HCT116 (cell line): ENCODE measurements at regions of chr12 and their contacts with region 1.

Region 1: DNA sequence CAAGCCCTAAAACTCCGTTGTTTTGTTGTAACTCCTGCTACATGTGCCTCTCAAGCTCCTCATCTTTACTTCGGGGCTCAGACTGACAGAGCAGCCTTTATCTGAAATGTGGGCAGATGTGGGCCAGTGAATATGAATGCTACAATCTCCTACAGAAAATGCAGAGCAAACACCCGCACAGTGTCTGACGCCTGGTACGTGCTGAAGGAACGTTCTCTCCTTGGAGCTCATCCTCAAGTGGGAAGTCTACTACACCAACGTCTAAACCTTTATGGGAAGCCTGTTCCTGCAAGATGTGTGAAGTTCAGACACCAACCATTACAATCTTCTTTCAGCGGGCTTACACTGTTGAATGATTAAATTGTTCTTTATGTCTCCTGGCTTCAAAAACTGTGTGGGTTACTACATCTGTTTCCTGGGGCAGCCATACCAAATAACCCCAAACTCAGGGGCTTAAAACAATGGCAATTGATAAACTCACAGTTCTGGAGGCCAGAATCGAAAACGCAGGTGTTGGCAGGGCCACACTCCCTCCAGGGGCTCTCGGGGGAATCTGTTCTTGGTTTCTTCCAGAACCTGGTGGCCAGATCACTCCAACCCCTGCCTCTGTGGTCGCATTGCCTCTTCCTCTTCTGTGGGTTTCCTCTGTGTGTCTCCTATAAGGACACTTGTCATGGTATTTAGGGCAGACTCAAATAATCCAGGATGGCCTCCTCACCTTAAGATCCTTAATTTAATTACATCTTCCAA is 179.7 kb upstream of the PLXNC1 start:
- DNase-seq: no peak
- ATAC-seq: no peak
- H3K4me3 ChIP-seq: no peak overlapping the region
- H3K27ac ChIP-seq: no peak overlapping the region
- H3K4me1 ChIP-seq: no peaks in the 10 kb centered on the region
- H3K27me3 ChIP-seq: no peaks in the 10 kb centered on the region
- CTCF ChIP-seq: no peak
- POLR2A ChIP-seq: no peak
- RAD21 ChIP-seq: no peak

Region 2: GRCh38 chr12:93698307-93699092 is 270.2 kb before region 1 on chr12:
- CTCF ChIA-PET with region 1: no interaction called
- POLR2A ChIA-PET with region 1: no interaction called
- RAD21 ChIA-PET with region 1: no interaction called
- intact Hi-C with region 1: no loop called
- DNase-seq: no peak
- ATAC-seq: no peak
- H3K4me3 ChIP-seq: no peak overlapping the region
- H3K27ac ChIP-seq: no peak overlapping the region
- H3K4me1 ChIP-seq: peaks cover 10 to 51% of the 10 kb centered on the region in 2 experiments
- H3K27me3 ChIP-seq: no peaks in the 10 kb centered on the region
- CTCF ChIP-seq: no peak
- POLR2A ChIP-seq: no peak
- RAD21 ChIP-seq: no peak

Region 3: GRCh38 chr12:93991829-93992461 is 23.2 kb after region 1 on chr12:
- CTCF ChIA-PET with region 1: no interaction called
- POLR2A ChIA-PET with region 1: no interaction called
- RAD21 ChIA-PET with region 1: no interaction called
- intact Hi-C with region 1: loop called (anchors 2 kb)
- DNase-seq: no peak
- ATAC-seq: no peak
- H3K4me3 ChIP-seq: no peak overlapping the region
- H3K27ac ChIP-seq: no peak overlapping the region
- H3K4me1 ChIP-seq: no peaks in the 10 kb centered on the region
- H3K27me3 ChIP-seq: no peaks in the 10 kb centered on the region
- CTCF ChIP-seq: no peak
- POLR2A ChIP-seq: no peak
- RAD21 ChIP-seq: no peak

Region 4: DNA sequence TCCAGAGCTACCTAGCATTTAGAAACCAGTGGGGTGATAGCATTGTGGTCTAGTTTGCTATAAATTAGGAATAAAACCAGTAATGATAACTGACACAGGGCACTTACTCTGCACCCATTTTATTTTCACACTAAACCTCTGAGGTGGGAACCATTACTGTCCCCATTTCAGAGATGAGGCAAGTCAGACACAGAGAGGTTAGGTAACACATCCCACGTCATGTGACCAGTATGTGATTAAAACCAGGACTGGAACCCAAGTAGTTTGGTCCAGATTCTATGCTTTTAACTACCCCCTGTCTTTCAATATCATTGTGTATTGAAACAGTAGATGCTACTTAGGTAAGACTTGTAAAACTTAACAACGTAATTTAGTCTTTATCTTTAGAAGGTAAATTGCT is 289.9 kb after region 1 on chr12:
- CTCF ChIA-PET with region 1: no interaction called
- POLR2A ChIA-PET with region 1: no interaction called
- RAD21 ChIA-PET with region 1: no interaction called
- intact Hi-C with region 1: no loop called
- DNase-seq: no peak
- ATAC-seq: no peak
- H3K4me3 ChIP-seq: no peak overlapping the region
- H3K27ac ChIP-seq: no peak overlapping the region
- H3K4me1 ChIP-seq: peaks cover 11 to 18% of the 10 kb centered on the region in 2 experiments
- H3K27me3 ChIP-seq: no peaks in the 10 kb centered on the region
- CTCF ChIP-seq: no peak
- POLR2A ChIP-seq: no peak
- RAD21 ChIP-seq: no peak